Activated CD4-positive, alpha-beta T cell treated with anti-CD3 and anti-CD28 coated beads for 36 hours (primary cell): ENCODE measurements at regions of chr12 and their contacts with region 1.

Region 1: GRCh38 chr12:90499795-90500194 is 455.2 kb downstream of the CCER1 start:
- DNase-seq: no peak
- ATAC-seq: no peak
- H3K4me3 Mint-ChIP-seq: no peak overlapping the region
- H3K27ac Mint-ChIP-seq: no peak overlapping the region
- H3K4me1 Mint-ChIP-seq: peaks cover 4% of the 10 kb centered on the region
- H3K27me3 Mint-ChIP-seq: peaks cover 2% of the 10 kb centered on the region

Region 2: DNA sequence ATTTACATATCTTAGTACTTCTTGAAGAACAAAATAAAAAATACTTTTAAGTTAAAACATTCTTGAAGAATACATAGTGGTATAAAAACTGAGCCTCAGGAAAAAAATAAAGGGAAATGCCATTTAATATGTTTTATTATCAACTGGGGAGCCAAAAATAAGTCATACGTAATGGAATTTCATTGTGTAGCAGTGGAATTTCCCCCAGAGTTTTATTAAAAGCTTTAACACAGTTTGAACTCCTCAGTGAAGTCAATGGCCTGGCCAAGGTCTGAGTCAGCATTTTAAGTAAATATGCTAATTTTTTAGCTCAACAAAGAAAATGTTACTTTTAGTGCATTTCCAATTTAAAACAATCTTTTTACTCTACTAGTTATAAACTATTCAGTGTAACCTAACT is 441.1 kb before region 1 on chr12:
- CTCF ChIA-PET with region 1: no interaction called
- POLR2A ChIA-PET with region 1: no interaction called
- intact Hi-C with region 1: no loop called
- DNase-seq: no peak
- ATAC-seq: no peak
- H3K4me3 Mint-ChIP-seq: no peak overlapping the region
- H3K27ac Mint-ChIP-seq: no peak overlapping the region
- H3K4me1 Mint-ChIP-seq: no peaks in the 10 kb centered on the region
- H3K27me3 Mint-ChIP-seq: no peaks in the 10 kb centered on the region

Region 3: DNA sequence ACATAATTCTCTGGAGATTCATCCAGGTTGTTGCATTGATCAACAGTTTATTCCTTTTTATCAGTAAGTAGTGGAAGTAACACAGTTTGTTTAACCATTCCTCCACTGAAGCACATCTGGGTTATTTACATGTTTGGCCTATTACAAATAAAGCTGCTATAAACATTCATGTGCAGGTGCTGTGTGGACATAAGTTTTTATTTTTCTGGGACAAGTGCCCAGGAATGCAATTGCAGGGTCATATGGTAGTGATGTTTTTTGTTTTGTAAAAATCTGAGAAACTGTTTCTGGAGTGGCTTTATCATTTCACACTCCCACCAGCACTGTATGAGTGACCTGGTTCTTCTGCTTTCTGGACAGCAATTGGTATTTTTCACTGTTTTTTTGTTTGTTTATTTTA is 50.2 kb before region 1 on chr12:
- CTCF ChIA-PET with region 1: no interaction called
- POLR2A ChIA-PET with region 1: no interaction called
- intact Hi-C with region 1: no loop called
- DNase-seq: no peak
- ATAC-seq: no peak
- H3K4me3 Mint-ChIP-seq: no peak overlapping the region
- H3K27ac Mint-ChIP-seq: no peak overlapping the region
- H3K4me1 Mint-ChIP-seq: no peaks in the 10 kb centered on the region
- H3K27me3 Mint-ChIP-seq: no peaks in the 10 kb centered on the region

Region 4: DNA sequence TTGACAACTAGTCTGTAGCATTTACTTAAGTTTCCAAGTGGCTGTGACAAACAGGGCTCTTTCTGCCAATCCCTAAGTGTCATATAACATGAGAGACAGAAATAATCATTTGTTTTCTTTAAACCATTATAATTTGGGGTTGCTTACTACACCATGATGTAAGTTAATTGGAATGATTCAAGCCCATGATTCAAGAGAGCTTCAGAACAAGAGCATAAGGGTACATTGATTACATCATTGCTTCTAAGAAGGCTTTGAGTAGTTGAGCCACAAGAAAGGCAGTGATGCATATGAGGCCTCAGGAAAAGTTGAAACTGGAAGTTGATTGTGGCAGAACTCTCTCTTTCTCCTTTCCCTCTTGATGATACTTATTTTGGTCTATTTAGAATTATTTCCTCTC is 11.2 kb after region 1 on chr12:
- CTCF ChIA-PET with region 1: no interaction called
- POLR2A ChIA-PET with region 1: no interaction called
- intact Hi-C with region 1: loop called in 1 of 2 experiments (anchors 1 kb)
- DNase-seq: no peak
- ATAC-seq: peak; percentile 63
- H3K4me3 Mint-ChIP-seq: no peak overlapping the region
- H3K27ac Mint-ChIP-seq: no peak overlapping the region
- H3K4me1 Mint-ChIP-seq: peaks cover 15% of the 10 kb centered on the region
- H3K27me3 Mint-ChIP-seq: peaks cover 12% of the 10 kb centered on the region